ENCODE measurements at regions of chr20 and their contacts with region 1.

Region 1: GRCh38 chr20:45890985-45891983 is at the starts of genes CTSA and NEURL2:
- DNase-seq: peak; percentile 91
- ATAC-seq: peak; percentile 87
- H3K4me3 Mint-ChIP-seq: peak within 1 kb of the TSS; percentile 87
- H3K27ac Mint-ChIP-seq: peak within 1 kb of the TSS; percentile 82
- H3K4me1 Mint-ChIP-seq: peaks cover 43% of the 10 kb centered on the region
- H3K27me3 Mint-ChIP-seq: no peaks in the 10 kb centered on the region
- total RNA-seq, gene CTSA: 63.4 to 64.1 TPM
- total RNA-seq, gene NEURL2: 1.1 to 1.3 TPM

Region 2: GRCh38 chr20:45779011-45779915 is 112.0 kb before region 1 on chr20:
- CTCF ChIA-PET with region 1: no interaction called
- POLR2A ChIA-PET with region 1: no interaction called
- DNase-seq: no peak
- ATAC-seq: no peak
- H3K4me3 Mint-ChIP-seq: no peak overlapping the region
- H3K27ac Mint-ChIP-seq: no peak overlapping the region
- H3K4me1 Mint-ChIP-seq: peaks cover 31% of the 10 kb centered on the region
- H3K27me3 Mint-ChIP-seq: peaks cover 11% of the 10 kb centered on the region

Region 3: GRCh38 chr20:45880988-45881788 is 10.1 kb before region 1 on chr20 and contains the start of gene ZSWIM1:
- CTCF ChIA-PET with region 1: interaction called, 22 read pairs
- POLR2A ChIA-PET with region 1: interaction called, 27 read pairs
- DNase-seq: peak; percentile 99
- ATAC-seq: peak; percentile 99
- H3K4me3 Mint-ChIP-seq: peak within 1 kb of the TSS; percentile 86
- H3K27ac Mint-ChIP-seq: peak within 1 kb of the TSS; percentile 84
- H3K4me1 Mint-ChIP-seq: peaks cover 39% of the 10 kb centered on the region
- H3K27me3 Mint-ChIP-seq: no peaks in the 10 kb centered on the region
- total RNA-seq, gene ZSWIM1: 7.0 TPM

Measured in activated CD8-positive, alpha-beta T cell treated with anti-CD3 and anti-CD28 coated beads, Interleukin-2, amount 10 ng/mL, durations not matched to agents 7 days and 5 days (primary cell).